Mammary epithelial cell (primary cell): ENCODE measurements at regions of chr22 and their contacts with region 1.

Region 1: DNA sequence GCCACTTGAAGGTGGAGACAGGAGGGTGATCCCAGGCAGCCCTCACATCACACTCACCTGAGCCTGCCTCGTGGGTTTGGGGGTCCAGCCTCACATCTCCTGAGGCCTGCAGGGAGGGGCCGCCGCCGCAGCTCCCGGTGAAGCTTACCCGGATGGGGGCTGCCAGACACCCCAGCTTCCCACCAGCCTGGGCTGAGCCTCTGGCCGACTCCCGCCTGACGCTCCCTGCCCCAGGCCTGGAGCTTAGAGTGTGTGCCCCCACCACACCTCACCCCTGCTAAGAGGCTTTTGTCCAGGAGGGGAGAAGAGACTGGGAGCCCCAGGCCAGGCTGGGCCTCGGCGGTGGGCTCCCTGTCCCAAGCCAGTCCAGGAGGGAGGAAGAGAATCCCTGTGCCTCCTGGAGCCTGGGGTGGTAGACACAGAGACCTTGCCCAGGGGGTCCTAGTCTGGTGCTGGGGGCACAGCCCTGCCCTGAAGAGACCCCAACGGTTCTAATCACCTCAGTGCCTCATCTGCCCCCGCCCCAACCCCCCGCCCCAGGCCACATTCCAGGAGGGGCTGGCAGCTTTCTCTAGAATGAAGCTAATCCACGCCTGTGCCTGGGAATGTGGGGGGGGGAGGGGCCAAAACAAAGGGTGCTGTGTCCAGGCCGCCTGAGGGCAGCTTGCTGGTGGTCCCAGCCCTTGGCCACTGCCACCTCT is at the start of gene SLC16A8:
- DNase-seq: no peak
- H3K4me3 ChIP-seq: no peak within 1 kb of the TSS
- H3K27ac ChIP-seq: no peak within 1 kb of the TSS
- H3K4me1 ChIP-seq: peaks cover 16% of the 10 kb centered on the region
- H3K27me3 ChIP-seq: peaks cover 5% of the 10 kb centered on the region
- CTCF ChIP-seq: no peak
- total RNA-seq, gene SLC16A8: not detected

Region 2: GRCh38 chr22:38104084-38104483 is 20.0 kb after region 1 on chr22:
- CTCF ChIA-PET with region 1: interaction called, 11 read pairs
- dilution Hi-C with region 1: no loop called
- in situ Hi-C with region 1: no loop called
- intact Hi-C with region 1: no loop called
- DNase-seq: no peak
- H3K4me3 ChIP-seq: no peak overlapping the region
- H3K27ac ChIP-seq: no peak overlapping the region
- H3K4me1 ChIP-seq: no peaks in the 10 kb centered on the region
- H3K27me3 ChIP-seq: no peaks in the 10 kb centered on the region
- CTCF ChIP-seq: peak in 1 of 2 donors; percentile 43